GM12878 (cell line): ENCODE measurements at regions of chr3 and their contacts with region 1.

Region 1: DNA sequence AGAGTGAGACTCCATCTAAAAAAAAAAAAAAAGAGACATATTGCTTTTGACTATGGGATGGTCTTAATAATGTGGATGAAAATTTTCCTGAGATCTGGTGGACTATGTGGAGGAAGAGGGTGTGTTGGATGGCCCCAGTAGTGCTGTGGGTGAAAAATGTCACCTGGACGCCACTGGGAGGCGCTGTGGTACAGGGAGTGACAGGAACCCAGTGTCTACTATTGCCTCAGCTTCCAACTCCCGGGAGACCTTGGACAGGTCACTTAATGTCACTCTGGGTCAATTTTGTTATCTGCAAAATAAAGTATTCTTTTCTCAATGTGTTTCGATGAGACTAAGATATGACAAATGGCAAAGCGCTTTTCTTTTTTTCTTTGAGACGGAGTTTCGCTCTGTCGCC is 27.7 kb upstream of the DCP1A start:
- DNase-seq: no peak
- ATAC-seq: peak; percentile 98
- H3K4me3 ChIP-seq: no peak overlapping the region
- H3K27ac ChIP-seq: no peak overlapping the region
- H3K4me1 ChIP-seq: no peaks in the 10 kb centered on the region
- H3K27me3 ChIP-seq: no peaks in the 10 kb centered on the region; a peak in 1 of 4 replicates
- CTCF ChIP-seq: peak; percentile 84 to 92 (median 87)
- EP300 ChIP-seq: no peak
- POLR2A ChIP-seq: no peak
- RAD21 ChIP-seq: peak; percentile 88

Region 2: DNA sequence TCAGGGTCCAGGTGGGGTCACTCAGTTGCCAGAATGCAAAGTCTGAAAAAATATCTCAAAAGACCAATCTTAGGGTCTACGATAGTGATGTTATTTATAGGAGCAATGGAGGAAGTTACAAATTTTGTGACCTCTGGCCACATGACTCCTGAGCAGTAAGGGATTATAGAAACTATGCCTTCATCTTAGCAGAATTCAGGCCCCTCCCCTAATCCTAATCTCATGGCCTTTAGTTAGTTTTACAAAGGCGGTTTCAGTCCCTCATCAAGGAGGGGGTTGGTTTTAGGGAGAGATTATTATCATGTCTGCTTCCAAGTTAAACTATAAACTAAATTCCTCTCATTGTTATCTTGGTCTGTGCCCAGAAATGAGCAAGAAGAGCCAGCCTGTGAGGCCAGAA is 21.8 kb before region 1 on chr3:
- CTCF ChIA-PET with region 1: no interaction called
- POLR2A ChIA-PET with region 1: no interaction called
- RAD21 ChIA-PET with region 1: no interaction called
- SMC1A ChIA-PET with region 1: no interaction called
- in situ Hi-C with region 1: no loop called
- intact Hi-C with region 1: no loop called
- DNase-seq: no peak
- ATAC-seq: no peak
- H3K4me3 ChIP-seq: no peak overlapping the region
- H3K27ac ChIP-seq: no peak overlapping the region
- H3K4me1 ChIP-seq: no peaks in the 10 kb centered on the region
- H3K27me3 ChIP-seq: no peaks in the 10 kb centered on the region
- CTCF ChIP-seq: no peak
- EP300 ChIP-seq: no peak
- POLR2A ChIP-seq: no peak
- RAD21 ChIP-seq: no peak

Region 3: GRCh38 chr3:53513556-53514190 is 138.7 kb after region 1 on chr3:
- CTCF ChIA-PET with region 1: interaction called, 8 read pairs
- POLR2A ChIA-PET with region 1: no interaction called
- RAD21 ChIA-PET with region 1: interaction called, 3 read pairs
- SMC1A ChIA-PET with region 1: interaction called, 5 read pairs
- in situ Hi-C with region 1: no loop called
- intact Hi-C with region 1: loop called (anchors 5 kb)
- DNase-seq: no peak
- ATAC-seq: peak; percentile 94
- H3K4me3 ChIP-seq: no peak overlapping the region
- H3K27ac ChIP-seq: no peak overlapping the region
- H3K4me1 ChIP-seq: no peaks in the 10 kb centered on the region
- H3K27me3 ChIP-seq: peaks cover 0 to 6% of the 10 kb centered on the region in 2 experiments; a peak in 3 of 4 replicates
- CTCF ChIP-seq: peak; percentile 25 to 57 (median 39); a peak in 4 of 6 replicates
- EP300 ChIP-seq: no peak
- POLR2A ChIP-seq: no peak
- RAD21 ChIP-seq: peak; percentile 19; the same call in 1 of the 2 replicates

Region 4: DNA sequence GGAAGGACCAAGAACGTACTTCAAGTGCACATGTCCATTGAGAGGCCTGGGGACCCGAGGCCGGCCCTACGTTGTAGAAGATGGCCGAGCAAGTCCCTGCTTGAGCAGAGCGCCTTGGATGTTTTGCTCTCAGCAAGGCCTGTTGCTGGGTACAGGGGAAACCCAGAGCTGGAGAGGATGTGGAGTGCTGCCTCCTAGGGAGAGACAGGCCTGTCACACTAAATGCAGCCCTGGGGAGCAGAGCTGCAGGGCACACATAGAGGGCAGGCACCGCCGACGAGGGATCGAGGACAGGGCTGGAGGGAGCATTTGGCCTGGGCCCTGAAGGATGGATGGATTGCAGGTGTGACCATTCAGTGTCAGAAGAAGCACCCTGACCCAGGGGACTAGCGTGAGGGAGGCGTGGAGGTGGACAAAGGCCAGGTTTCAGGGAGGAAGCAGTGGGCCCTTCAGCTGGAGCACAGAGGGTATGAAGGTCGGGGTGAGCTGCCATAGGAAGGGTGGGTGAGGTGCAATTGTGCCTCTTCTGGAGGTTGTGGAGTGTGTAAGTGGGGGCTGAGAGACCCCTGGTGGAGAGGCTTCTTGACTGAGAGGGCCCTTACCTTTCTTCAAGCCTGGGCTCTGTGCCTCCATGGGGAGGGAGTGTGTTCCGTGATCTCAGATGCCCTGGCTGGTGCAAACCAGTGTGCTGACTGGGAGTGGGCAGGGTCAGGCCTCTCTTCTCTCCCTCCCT is 328.8 kb after region 1 on chr3:
- CTCF ChIA-PET with region 1: interaction called, 113 read pairs
- POLR2A ChIA-PET with region 1: no interaction called
- RAD21 ChIA-PET with region 1: interaction called, 38 read pairs
- SMC1A ChIA-PET with region 1: interaction called, 26 read pairs
- in situ Hi-C with region 1: loop called (anchors 5 kb)
- intact Hi-C with region 1: no loop called
- DNase-seq: no peak
- ATAC-seq: peak; percentile 29
- H3K4me3 ChIP-seq: no peak overlapping the region
- H3K27ac ChIP-seq: no peak overlapping the region
- H3K4me1 ChIP-seq: no peaks in the 10 kb centered on the region
- H3K27me3 ChIP-seq: no peaks in the 10 kb centered on the region
- CTCF ChIP-seq: peak in 1 of 3 experiments; percentile 2; a peak in 1 of 6 replicates
- EP300 ChIP-seq: no peak
- POLR2A ChIP-seq: no peak
- RAD21 ChIP-seq: no peak

Region 5: GRCh38 chr3:53921296-53921695 is 546.3 kb after region 1 on chr3:
- CTCF ChIA-PET with region 1: no interaction called
- POLR2A ChIA-PET with region 1: no interaction called
- RAD21 ChIA-PET with region 1: no interaction called
- SMC1A ChIA-PET with region 1: no interaction called
- in situ Hi-C with region 1: no loop called
- intact Hi-C with region 1: loop called (anchors 5 kb)
- DNase-seq: no peak
- ATAC-seq: peak; percentile 81
- H3K4me3 ChIP-seq: no peak overlapping the region
- H3K27ac ChIP-seq: no peak overlapping the region
- H3K4me1 ChIP-seq: no peaks in the 10 kb centered on the region
- H3K27me3 ChIP-seq: no peaks in the 10 kb centered on the region
- CTCF ChIP-seq: peak; percentile 51 to 58 (median 56); a peak in 5 of 6 replicates
- EP300 ChIP-seq: no peak
- POLR2A ChIP-seq: no peak
- RAD21 ChIP-seq: peak; percentile 50